ENCODE measurements at regions of chr15 and their contacts with region 1.

Region 1: GRCh38 chr15:52179278-52180195 is 11.7 kb downstream of the GNB5 start:
- DNase-seq: peak; percentile 95
- ATAC-seq: peak; percentile 78
- H3K4me3 ChIP-seq: peak overlapping the region; percentile 67 to 97 (median 87)
- H3K4me3 Mint-ChIP-seq: peak overlapping the region; percentile 93
- H3K27ac ChIP-seq: peak overlapping the region; percentile 97
- H3K27ac Mint-ChIP-seq: peak overlapping the region; percentile 99
- H3K4me1 ChIP-seq: peaks cover 33 to 48% of the 10 kb centered on the region in 2 donors
- H3K4me1 Mint-ChIP-seq: peaks cover 59% of the 10 kb centered on the region
- H3K27me3 ChIP-seq: no peaks in the 10 kb centered on the region
- H3K27me3 Mint-ChIP-seq: no peaks in the 10 kb centered on the region
- CTCF ChIP-seq: no peak

Region 2: DNA sequence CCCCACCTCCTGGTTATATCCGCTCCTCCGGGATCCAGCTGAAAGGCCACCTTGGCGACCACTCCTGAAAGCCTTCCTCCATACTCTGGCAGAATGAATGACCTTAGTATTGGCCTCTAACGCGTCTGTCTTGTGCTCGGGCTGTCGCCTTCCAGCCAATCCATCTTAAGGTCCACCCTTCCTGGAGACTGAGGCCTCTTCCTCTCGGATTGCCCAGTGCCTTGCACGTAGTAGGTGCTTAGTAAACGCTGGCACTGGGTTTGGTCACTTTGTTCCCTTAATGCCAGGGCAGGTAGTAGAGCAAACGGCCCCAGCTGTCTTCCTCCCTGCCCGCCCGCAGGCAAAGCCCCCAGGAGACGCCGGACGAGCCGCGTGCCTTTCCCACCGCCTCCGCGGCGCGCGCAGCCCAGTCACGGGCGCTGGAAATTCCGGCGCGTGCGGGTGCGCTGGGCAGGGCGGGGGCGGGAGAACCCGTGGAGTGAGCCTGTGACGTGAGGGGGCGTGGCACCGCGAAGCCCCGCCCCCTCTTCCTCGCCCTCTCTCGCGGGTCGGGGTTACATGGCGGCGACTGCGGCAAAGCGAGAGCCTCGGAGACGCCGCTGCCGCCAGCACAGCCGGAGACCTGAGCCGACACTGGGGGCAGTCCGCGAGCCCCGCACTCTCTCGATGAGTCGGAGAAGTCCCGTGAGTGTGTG is 160.7 kb before region 1 on chr15 and contains the start of gene MAPK6:
- CTCF ChIA-PET with region 1: no interaction called
- POLR2A ChIA-PET with region 1: no interaction called
- intact Hi-C with region 1: loop called (anchors 2 kb)
- DNase-seq: peak; percentile 98
- ATAC-seq: peak; percentile 86
- H3K4me3 ChIP-seq: peak within 1 kb of the TSS; percentile 68 to 83 (median 81)
- H3K4me3 Mint-ChIP-seq: peak within 1 kb of the TSS; percentile 98
- H3K27ac ChIP-seq: peak within 1 kb of the TSS; percentile 83 to 86
- H3K27ac Mint-ChIP-seq: peak within 1 kb of the TSS; percentile 100
- H3K4me1 ChIP-seq: peaks cover 24 to 27% of the 10 kb centered on the region in 2 donors
- H3K4me1 Mint-ChIP-seq: peaks cover 30% of the 10 kb centered on the region
- H3K27me3 ChIP-seq: no peaks in the 10 kb centered on the region
- H3K27me3 Mint-ChIP-seq: no peaks in the 10 kb centered on the region
- CTCF ChIP-seq: no peak
- total RNA-seq, gene MAPK6: 17.9 and 20.2 TPM in 2 replicates

Region 3: DNA sequence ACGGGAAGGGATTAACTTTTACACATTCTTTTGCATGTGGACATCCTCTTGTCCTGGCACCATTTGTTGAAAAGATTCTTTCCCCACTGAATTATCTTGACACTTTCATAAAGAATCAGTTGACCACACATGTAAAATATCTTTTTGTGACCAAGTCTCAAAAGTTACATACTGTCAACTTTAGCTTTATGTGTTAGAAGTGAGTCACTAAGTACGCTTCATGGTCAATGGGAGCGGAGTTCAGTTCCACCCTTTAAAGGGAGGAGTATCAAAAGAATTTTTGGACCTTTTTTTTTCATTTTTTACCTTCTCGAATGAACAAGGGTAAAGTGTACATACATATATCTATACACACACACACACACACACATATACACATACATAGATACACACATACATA is 125.2 kb before region 1 on chr15:
- CTCF ChIA-PET with region 1: no interaction called
- POLR2A ChIA-PET with region 1: no interaction called
- intact Hi-C with region 1: no loop called
- DNase-seq: no peak
- ATAC-seq: no peak
- H3K4me3 ChIP-seq: no peak overlapping the region
- H3K4me3 Mint-ChIP-seq: no peak overlapping the region
- H3K27ac ChIP-seq: no peak overlapping the region
- H3K27ac Mint-ChIP-seq: no peak overlapping the region
- H3K4me1 ChIP-seq: no peaks in the 10 kb centered on the region
- H3K4me1 Mint-ChIP-seq: peaks cover 1% of the 10 kb centered on the region
- H3K27me3 ChIP-seq: no peaks in the 10 kb centered on the region
- H3K27me3 Mint-ChIP-seq: no peaks in the 10 kb centered on the region
- CTCF ChIP-seq: no peak

Region 4: DNA sequence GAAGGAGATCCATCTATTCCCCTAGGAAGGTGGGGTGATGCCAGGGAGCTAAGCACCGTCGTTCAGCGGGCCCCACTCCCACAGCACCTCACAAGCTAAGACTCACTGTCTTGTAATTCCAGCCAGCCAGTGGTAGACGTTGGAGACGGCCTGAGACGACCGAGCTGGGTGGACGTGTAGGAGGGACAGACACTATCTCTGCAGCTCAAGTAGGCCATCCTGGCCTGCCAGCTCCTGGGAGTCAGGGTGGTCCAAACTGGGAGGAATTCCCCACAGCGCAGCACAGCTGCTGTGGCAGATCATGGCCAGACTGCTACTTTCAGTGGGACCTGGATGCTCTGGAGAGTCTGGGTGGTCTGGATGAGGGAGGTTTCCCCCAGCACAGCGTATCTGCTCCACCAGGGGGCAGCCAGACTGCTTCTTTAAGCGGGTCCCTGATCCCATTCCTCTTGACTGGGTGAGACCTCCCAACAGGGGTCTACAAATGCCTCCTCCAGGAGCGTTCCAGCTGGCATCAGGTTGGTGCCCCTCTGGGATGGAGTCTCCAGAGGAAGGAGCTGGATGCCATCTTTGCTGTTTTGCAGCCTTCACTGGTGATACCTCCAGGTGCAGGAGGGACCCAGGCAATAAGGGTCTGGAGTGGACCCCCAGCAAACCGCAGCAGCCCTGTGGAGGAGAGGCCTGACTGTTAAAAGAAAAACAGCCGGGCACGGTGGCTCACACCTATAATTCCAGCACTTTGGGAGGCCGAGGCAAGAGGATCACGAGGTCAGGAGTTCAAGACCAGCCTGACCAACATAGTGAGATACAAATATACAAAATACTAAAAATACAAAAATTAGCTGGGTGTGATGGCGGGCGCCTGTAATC is 16.0 kb before region 1 on chr15:
- CTCF ChIA-PET with region 1: interaction called, 6 read pairs
- POLR2A ChIA-PET with region 1: interaction called, 3 read pairs
- intact Hi-C with region 1: loop called (anchors 2 kb)
- DNase-seq: peak; percentile 38
- ATAC-seq: no peak
- H3K4me3 ChIP-seq: no peak overlapping the region
- H3K4me3 Mint-ChIP-seq: no peak overlapping the region
- H3K27ac ChIP-seq: no peak overlapping the region
- H3K27ac Mint-ChIP-seq: no peak overlapping the region
- H3K4me1 ChIP-seq: peaks cover 11% of the 10 kb centered on the region in 2 donors
- H3K4me1 Mint-ChIP-seq: peaks cover 37% of the 10 kb centered on the region
- H3K27me3 ChIP-seq: no peaks in the 10 kb centered on the region
- H3K27me3 Mint-ChIP-seq: no peaks in the 10 kb centered on the region
- CTCF ChIP-seq: peak; percentile 35

Region 5: DNA sequence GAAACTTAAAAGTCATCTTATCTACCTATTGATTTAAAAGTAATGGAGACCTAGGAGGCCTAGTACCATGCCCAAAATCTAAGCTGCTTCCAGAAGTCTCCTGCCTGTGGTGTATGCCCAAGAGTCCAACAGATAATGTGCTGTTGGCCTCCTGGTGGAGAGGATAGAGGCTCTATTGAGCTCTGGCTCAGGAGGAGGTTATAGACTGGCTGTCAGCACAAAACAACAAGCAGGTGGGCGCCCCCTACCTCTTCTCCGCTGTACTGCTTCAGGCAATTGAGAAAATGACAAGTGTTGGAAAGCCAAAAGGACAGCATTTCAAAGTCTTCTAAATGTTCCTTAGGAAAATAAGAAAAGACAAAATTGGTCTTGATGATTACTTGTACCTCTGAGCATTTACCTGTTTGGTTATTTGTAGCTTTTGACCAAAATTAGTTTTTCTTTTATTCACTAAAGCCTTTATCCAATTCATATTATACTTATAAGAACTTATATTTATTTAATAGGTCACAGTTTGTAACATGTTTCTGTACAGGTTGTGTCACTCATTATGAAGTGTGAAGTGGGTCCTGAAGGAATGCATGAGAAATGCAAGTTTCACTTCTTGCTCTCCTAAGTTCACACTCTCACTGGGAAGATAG is 28.9 kb after region 1 on chr15:
- CTCF ChIA-PET with region 1: interaction called, 18 read pairs
- POLR2A ChIA-PET with region 1: interaction called, 4 read pairs
- intact Hi-C with region 1: loop called (anchors 2 kb)
- DNase-seq: peak; percentile 73
- ATAC-seq: peak; percentile 95
- H3K4me3 ChIP-seq: no peak overlapping the region
- H3K4me3 Mint-ChIP-seq: no peak overlapping the region
- H3K27ac ChIP-seq: no peak overlapping the region
- H3K27ac Mint-ChIP-seq: no peak overlapping the region
- H3K4me1 ChIP-seq: no peaks in the 10 kb centered on the region
- H3K4me1 Mint-ChIP-seq: no peaks in the 10 kb centered on the region
- H3K27me3 ChIP-seq: no peaks in the 10 kb centered on the region
- H3K27me3 Mint-ChIP-seq: no peaks in the 10 kb centered on the region
- CTCF ChIP-seq: peak; percentile 86

Region 6: GRCh38 chr15:52234596-52235541 is 55.3 kb after region 1 on chr15:
- CTCF ChIA-PET with region 1: interaction called, 10 read pairs
- POLR2A ChIA-PET with region 1: interaction called, 60 read pairs
- intact Hi-C with region 1: loop called (anchors 1 kb)
- DNase-seq: peak; percentile 81
- ATAC-seq: peak; percentile 57
- H3K4me3 ChIP-seq: peak overlapping the region in 3 of 5 experiments; percentile 3 to 54 (median 10)
- H3K4me3 Mint-ChIP-seq: peak overlapping the region; percentile 92
- H3K27ac ChIP-seq: peak overlapping the region; percentile 89 to 97
- H3K27ac Mint-ChIP-seq: peak overlapping the region; percentile 99
- H3K4me1 ChIP-seq: peaks cover 72 to 79% of the 10 kb centered on the region in 2 donors
- H3K4me1 Mint-ChIP-seq: peaks cover 75% of the 10 kb centered on the region
- H3K27me3 ChIP-seq: no peaks in the 10 kb centered on the region
- H3K27me3 Mint-ChIP-seq: no peaks in the 10 kb centered on the region
- CTCF ChIP-seq: no peak

Region 7: DNA sequence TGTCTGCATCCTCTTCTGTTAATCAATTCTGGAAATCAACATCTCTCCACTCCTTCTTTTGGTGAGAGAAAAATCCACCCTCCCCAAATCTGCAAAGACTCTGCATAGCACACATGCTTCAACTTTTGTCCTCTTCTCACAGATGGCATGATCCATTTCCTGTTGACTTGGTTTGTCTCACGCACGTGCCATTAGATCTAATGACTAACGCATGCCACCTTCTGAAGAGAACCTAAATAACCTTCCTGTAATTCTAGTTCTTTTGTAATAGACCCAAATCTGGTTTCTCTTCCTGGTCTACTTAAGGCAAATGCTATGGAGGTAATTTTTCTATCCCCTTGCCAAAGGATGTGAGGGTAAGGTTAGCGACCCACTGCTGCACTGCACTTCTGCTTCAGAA is 550.6 kb after region 1 on chr15:
- CTCF ChIA-PET with region 1: no interaction called
- POLR2A ChIA-PET with region 1: no interaction called
- intact Hi-C with region 1: loop called (anchors 2 kb)
- DNase-seq: peak; percentile 80
- ATAC-seq: peak; percentile 97
- H3K4me3 ChIP-seq: no peak overlapping the region
- H3K4me3 Mint-ChIP-seq: peak overlapping the region; percentile 64
- H3K27ac ChIP-seq: peak overlapping the region; percentile 46 to 60
- H3K27ac Mint-ChIP-seq: peak overlapping the region; percentile 91
- H3K4me1 ChIP-seq: peaks cover 26 to 31% of the 10 kb centered on the region in 2 donors
- H3K4me1 Mint-ChIP-seq: peaks cover 31% of the 10 kb centered on the region
- H3K27me3 ChIP-seq: no peaks in the 10 kb centered on the region
- H3K27me3 Mint-ChIP-seq: no peaks in the 10 kb centered on the region
- CTCF ChIP-seq: peak; percentile 49

Region 8: DNA sequence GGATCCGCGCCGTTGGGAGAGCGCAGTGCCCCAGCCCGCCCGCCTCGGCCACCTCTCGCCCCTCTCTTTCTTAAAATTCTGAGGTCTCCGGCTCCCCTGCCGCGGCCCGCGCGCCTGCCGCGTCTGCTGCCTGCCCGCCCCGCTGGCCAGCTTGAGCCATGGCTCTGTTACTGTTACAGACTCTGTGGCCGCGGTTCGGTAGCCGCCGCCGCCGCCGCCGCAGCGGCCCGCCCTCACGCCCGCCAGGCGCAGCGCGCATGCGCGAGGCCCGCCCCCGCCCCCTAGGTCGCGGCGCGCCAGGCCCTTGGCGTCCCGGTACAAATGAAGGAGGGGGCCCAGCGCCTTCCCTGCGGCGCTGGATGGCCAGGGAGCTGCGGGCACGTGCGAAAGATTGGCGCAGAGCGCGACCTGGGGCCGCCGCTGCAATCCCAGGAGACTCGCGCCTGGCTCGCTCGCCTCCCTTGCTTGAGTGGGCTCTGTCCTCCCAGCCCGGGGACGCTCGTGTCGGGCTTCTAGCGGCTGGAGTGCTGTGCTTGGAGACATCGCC is 610.7 kb after region 1 on chr15 and contains the start of gene ONECUT1:
- CTCF ChIA-PET with region 1: no interaction called
- POLR2A ChIA-PET with region 1: no interaction called
- intact Hi-C with region 1: no loop called
- DNase-seq: peak; percentile 83
- ATAC-seq: peak; percentile 67
- H3K4me3 ChIP-seq: peak within 1 kb of the TSS; percentile 25 to 87 (median 57)
- H3K4me3 Mint-ChIP-seq: peak within 1 kb of the TSS; percentile 84
- H3K27ac ChIP-seq: no peak within 1 kb of the TSS
- H3K27ac Mint-ChIP-seq: peak within 1 kb of the TSS; percentile 41
- H3K4me1 ChIP-seq: peaks cover 44 to 65% of the 10 kb centered on the region in 2 donors
- H3K4me1 Mint-ChIP-seq: peaks cover 34% of the 10 kb centered on the region
- H3K27me3 ChIP-seq: peaks cover 0 to 95% (median 83%) of the 10 kb centered on the region in 4 experiments
- H3K27me3 Mint-ChIP-seq: peaks cover 65% of the 10 kb centered on the region
- CTCF ChIP-seq: no peak
- total RNA-seq, gene ONECUT1: not detected in 2 replicates

Measured in B cell (primary cell).